ENCODE measurements at regions of chr3 and their contacts with region 1.

Region 1: GRCh38 chr3:14548321-14548729 is 8.2 kb upstream of the GRIP2 start:
- DNase-seq: peak; percentile 64
- ATAC-seq: peak; percentile 79
- H3K4me3 Mint-ChIP-seq: no peak overlapping the region
- H3K27ac Mint-ChIP-seq: no peak overlapping the region
- H3K4me1 Mint-ChIP-seq: no peaks in the 10 kb centered on the region
- H3K27me3 Mint-ChIP-seq: peaks cover 10% of the 10 kb centered on the region
- CTCF ChIP-seq: peak; percentile 46

Region 2: DNA sequence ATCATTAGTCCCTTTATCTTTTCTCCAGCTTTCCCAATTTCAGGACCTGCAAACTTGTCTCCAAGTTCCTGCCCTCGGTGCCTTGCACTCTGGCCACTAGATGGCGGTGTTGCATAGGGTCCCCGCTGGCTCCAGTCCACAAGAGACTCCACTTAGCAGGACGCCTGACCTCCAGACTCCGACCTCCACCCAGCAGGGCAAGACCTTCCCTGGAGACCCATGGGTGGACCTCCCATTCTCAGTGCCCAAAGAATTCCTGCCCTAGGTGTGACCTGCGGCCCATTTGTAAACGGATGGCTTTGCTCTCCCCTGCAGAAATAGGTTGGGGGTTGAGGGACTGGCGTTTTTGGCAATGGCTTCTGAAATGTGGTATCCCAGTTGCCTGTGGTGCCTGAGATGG is 287.1 kb before region 1 on chr3:
- CTCF ChIA-PET with region 1: interaction called, 3 read pairs
- POLR2A ChIA-PET with region 1: no interaction called
- intact Hi-C with region 1: loop called (anchors 5 kb)
- DNase-seq: peak; percentile 81
- ATAC-seq: peak; percentile 65
- H3K4me3 Mint-ChIP-seq: no peak overlapping the region
- H3K27ac Mint-ChIP-seq: no peak overlapping the region
- H3K4me1 Mint-ChIP-seq: no peaks in the 10 kb centered on the region
- H3K27me3 Mint-ChIP-seq: no peaks in the 10 kb centered on the region
- CTCF ChIP-seq: peak; percentile 97

Region 3: DNA sequence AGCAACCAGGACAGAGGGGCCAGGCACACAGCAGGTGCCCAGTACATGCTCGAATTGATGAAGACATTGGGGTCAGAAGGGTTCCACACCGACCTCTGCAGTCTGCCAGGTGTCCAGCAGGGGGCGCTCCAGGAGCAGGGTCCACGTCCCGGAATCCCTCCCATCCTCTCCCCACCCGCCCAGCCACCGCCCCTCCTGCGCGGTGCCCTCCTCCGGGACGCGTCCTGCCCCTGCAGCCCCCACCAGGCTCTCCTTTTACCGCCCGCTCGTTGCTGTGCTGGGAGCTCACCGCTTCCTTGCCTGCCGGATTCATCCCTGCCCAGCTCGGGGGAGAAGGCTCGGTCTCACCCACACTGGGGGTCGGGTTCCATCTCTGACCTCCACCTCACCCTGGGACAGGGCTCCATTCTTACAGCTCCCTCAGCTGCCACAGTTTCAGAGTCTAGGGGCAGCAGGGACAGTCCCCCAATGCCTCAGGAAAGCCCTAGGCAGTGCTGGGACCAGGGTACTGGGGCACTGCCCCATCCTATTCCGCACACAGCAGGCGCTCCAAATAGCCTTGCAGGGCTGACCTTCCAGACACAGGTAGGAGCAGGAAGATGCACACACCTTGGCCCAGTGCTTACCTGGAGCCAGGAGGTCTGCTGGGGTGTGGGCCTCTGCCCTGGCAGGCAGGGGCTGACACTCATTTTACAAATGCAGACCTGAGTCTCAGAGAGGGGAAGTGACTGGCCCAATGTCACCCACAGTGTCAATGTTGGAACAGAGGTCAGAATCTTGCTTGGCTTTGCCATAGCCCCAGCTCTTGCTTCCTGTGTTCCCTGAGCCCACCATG is 39.1 kb before region 1 on chr3:
- CTCF ChIA-PET with region 1: interaction called, 12 read pairs
- POLR2A ChIA-PET with region 1: no interaction called
- intact Hi-C with region 1: loop called (anchors 5 kb)
- DNase-seq: peak; percentile 85
- ATAC-seq: peak; percentile 94
- H3K4me3 Mint-ChIP-seq: no peak overlapping the region
- H3K27ac Mint-ChIP-seq: no peak overlapping the region
- H3K4me1 Mint-ChIP-seq: no peaks in the 10 kb centered on the region
- H3K27me3 Mint-ChIP-seq: no peaks in the 10 kb centered on the region
- CTCF ChIP-seq: peak; percentile 99

Region 4: GRCh38 chr3:14537590-14538447 is 10.5 kb before region 1 on chr3:
- CTCF ChIA-PET with region 1: interaction called, 16 read pairs
- POLR2A ChIA-PET with region 1: interaction called, 4 read pairs
- intact Hi-C with region 1: no loop called
- DNase-seq: peak; percentile 37
- ATAC-seq: no peak
- H3K4me3 Mint-ChIP-seq: no peak overlapping the region
- H3K27ac Mint-ChIP-seq: no peak overlapping the region
- H3K4me1 Mint-ChIP-seq: no peaks in the 10 kb centered on the region
- H3K27me3 Mint-ChIP-seq: no peaks in the 10 kb centered on the region
- CTCF ChIP-seq: no peak